K562 (cell line): ENCODE measurements at regions of chr14 and their contacts with region 1.

Region 1: GRCh38 chr14:58131386-58131785 is 20.6 kb downstream of the ARMH4 start:
- DNase-seq: peak in 2 of 4 experiments; percentile 24 to 32
- ATAC-seq: peak; percentile 79
- H3K4me3 ChIP-seq: no peak overlapping the region
- H3K27ac ChIP-seq: no peak overlapping the region
- H3K4me1 ChIP-seq: peaks cover 0 to under 1% of the 10 kb centered on the region in 2 experiments; a peak in 2 of 5 replicates
- H3K27me3 ChIP-seq: no peaks in the 10 kb centered on the region
- CTCF ChIP-seq: peak; percentile 16 to 38 (median 23); a peak in 2 of 6 replicates
- EP300 ChIP-seq: no peak
- POLR2A ChIP-seq: no peak
- RAD21 ChIP-seq: peak in 1 of 2 experiments; percentile 49; a peak in 2 of 4 replicates

Region 2: DNA sequence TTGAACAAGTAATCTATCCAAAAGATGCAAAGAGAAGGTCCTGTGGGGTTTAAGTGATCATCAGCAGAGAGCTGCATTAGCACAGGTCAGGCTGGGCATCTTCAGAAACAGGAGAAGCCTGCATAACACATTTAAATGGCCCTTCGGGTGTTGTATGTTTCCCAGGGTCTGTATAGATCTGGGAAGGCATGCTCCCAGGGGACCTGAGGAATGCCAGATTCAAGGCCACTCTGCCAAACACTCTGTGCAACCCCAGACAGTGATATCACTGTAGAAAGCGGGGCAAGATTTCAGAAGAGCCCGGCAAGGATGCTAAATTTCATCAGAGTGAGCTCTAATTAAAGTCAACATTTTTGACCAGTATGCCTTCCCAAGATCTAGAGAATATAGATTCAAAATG is 72.3 kb before region 1 on chr14:
- CTCF ChIA-PET with region 1: no interaction called
- POLR2A ChIA-PET with region 1: no interaction called
- in situ Hi-C with region 1: no loop called
- intact Hi-C with region 1: no loop called
- DNase-seq: no peak
- ATAC-seq: no peak
- H3K4me3 ChIP-seq: no peak overlapping the region
- H3K27ac ChIP-seq: no peak overlapping the region
- H3K4me1 ChIP-seq: no peaks in the 10 kb centered on the region
- H3K27me3 ChIP-seq: no peaks in the 10 kb centered on the region; a peak in 1 of 5 replicates
- CTCF ChIP-seq: no peak
- EP300 ChIP-seq: no peak
- POLR2A ChIP-seq: no peak
- RAD21 ChIP-seq: no peak

Region 3: GRCh38 chr14:58166005-58166983 is 34.9 kb after region 1 on chr14:
- CTCF ChIA-PET with region 1: no interaction called
- POLR2A ChIA-PET with region 1: no interaction called
- in situ Hi-C with region 1: no loop called
- intact Hi-C with region 1: loop called (anchors 1 kb)
- DNase-seq: peak; percentile 58 to 82 (median 60)
- ATAC-seq: peak; percentile 83
- H3K4me3 ChIP-seq: no peak overlapping the region
- H3K27ac ChIP-seq: no peak overlapping the region
- H3K4me1 ChIP-seq: peaks cover 3 to 7% of the 10 kb centered on the region in 2 experiments; a peak in 2 of 5 replicates
- H3K27me3 ChIP-seq: no peaks in the 10 kb centered on the region
- CTCF ChIP-seq: peak; percentile 70 to 82 (median 80)
- EP300 ChIP-seq: no peak
- POLR2A ChIP-seq: no peak
- RAD21 ChIP-seq: peak; percentile 65 to 72